A673 (cell line): ENCODE measurements at regions of chr9 and their contacts with region 1.

Region 1: GRCh38 chr9:87950765-87951488 is 23.4 kb downstream of the CDK20 start:
- DNase-seq: peak; percentile 63
- H3K4me3 ChIP-seq: no peak overlapping the region
- H3K27ac ChIP-seq: no peak overlapping the region
- H3K4me1 ChIP-seq: no peaks in the 10 kb centered on the region
- H3K27me3 ChIP-seq: no peaks in the 10 kb centered on the region
- CTCF ChIP-seq: peak; percentile 68

Region 2: GRCh38 chr9:88041447-88041846 is 90.5 kb after region 1 on chr9:
- CTCF ChIA-PET with region 1: no interaction called
- POLR2A ChIA-PET with region 1: no interaction called
- intact Hi-C with region 1: loop called (anchors 5 kb)
- DNase-seq: peak; percentile 42
- H3K4me3 ChIP-seq: no peak overlapping the region
- H3K27ac ChIP-seq: no peak overlapping the region
- H3K4me1 ChIP-seq: no peaks in the 10 kb centered on the region
- H3K27me3 ChIP-seq: no peaks in the 10 kb centered on the region
- CTCF ChIP-seq: peak; percentile 63

Region 3: GRCh38 chr9:88303721-88304451 is 353.0 kb after region 1 on chr9:
- CTCF ChIA-PET with region 1: no interaction called
- POLR2A ChIA-PET with region 1: no interaction called
- intact Hi-C with region 1: no loop called
- DNase-seq: peak; percentile 15
- H3K4me3 ChIP-seq: no peak overlapping the region
- H3K27ac ChIP-seq: no peak overlapping the region
- H3K4me1 ChIP-seq: no peaks in the 10 kb centered on the region
- H3K27me3 ChIP-seq: no peaks in the 10 kb centered on the region
- CTCF ChIP-seq: no peak

Region 4: DNA sequence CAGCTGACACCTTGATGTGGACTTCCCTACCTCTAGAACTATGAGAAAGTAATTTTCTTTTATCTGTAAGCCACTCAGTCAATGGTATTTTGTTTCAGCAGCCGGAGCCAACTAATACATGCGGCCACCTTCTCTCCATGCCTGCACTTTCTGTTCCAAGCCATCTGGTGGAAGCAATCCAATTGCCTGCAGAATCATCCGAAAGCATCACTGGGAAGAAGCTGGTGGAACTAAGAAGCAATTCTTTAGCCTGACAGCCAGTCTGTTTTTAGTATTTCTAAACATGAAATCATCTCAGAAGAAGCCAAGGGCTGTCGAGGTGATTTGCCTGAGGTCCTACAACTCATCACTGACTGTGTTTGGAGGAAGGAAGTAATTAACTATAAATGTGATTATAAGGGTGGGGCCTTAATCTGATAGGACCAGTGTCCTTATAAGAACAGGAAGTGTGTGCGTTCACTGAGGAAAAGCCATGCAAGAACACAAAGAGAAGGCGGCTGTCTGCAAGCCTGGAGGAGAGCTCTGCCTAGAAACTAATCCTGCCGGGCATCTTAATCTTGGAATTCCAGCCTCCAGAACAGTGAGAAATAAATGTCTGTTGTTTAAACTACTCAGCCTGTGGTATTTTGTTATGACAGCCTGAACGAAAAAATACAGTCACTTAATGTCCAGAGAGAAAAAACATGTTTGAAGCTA is 633.1 kb after region 1 on chr9:
- CTCF ChIA-PET with region 1: no interaction called
- POLR2A ChIA-PET with region 1: no interaction called
- intact Hi-C with region 1: loop called (anchors 10 kb)
- DNase-seq: peak; percentile 98
- H3K4me3 ChIP-seq: no peak overlapping the region
- H3K27ac ChIP-seq: peak overlapping the region; percentile 91
- H3K4me1 ChIP-seq: peaks cover 15% of the 10 kb centered on the region
- H3K27me3 ChIP-seq: no peaks in the 10 kb centered on the region
- CTCF ChIP-seq: peak; percentile 32; the same call in 1 of the 2 replicates